ENCODE measurements at regions of chr4 and their contacts with region 1.

Region 1: DNA sequence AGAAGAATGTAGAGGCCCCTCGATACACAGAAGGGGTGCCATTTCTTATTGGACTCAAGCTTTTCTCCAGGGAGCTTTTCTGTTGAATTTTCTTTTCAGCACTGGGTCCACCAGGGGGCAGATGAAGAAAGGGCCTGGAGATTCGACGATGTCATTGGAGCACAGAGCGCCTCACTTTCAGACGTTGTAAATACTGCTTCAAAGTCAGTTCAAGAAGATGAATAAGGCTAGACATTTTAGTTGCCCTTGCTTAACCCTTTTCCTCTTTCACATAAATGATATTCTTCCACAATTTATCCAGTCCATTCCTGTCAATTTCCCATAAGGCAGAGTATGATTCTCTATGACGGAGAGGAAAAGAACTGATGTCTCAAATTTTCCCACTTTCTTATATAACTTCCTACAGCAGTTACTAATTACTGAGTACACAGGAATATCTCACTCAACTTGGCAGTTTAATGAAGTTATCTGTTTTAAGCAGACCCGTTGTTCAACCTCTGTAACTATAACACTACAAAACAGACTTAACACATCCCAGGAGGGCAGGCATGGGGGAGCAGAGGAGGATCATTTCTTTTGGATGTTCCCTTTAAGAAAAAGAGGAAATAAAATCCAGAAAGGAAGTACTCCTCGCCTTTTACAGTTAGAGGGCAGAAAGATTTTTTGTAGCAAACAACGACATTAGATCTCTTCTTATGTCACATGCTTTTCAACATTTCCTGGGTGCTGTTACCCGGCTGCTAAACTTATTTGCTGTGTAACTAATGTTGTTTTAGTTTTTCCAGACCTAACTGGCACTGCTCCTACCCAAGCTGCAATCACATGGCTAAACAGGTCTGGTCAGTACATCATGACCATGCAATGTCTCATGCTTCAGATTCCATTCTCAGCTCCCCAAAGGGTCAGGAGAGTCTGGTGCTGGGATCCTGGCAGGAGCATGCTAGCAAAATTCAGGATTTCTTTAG is 12.2 kb upstream of the CENPU start:
- DNase-seq: peak; percentile 65 to 78
- ATAC-seq: peak; percentile 44 to 73 (median 56)
- H3K4me3 ChIP-seq: peak overlapping the region; percentile 31
- H3K27ac ChIP-seq: peak overlapping the region; percentile 75
- H3K4me1 ChIP-seq: peaks cover 37% of the 10 kb centered on the region
- H3K27me3 ChIP-seq: no peaks in the 10 kb centered on the region
- CTCF ChIP-seq: peak; percentile 81

Region 2: GRCh38 chr4:184613405-184613804 is 132.7 kb before region 1 on chr4:
- intact Hi-C with region 1: no loop called
- DNase-seq: no peak
- ATAC-seq: no peak
- H3K4me3 ChIP-seq: no peak overlapping the region
- H3K27ac ChIP-seq: no peak overlapping the region
- H3K4me1 ChIP-seq: no peaks in the 10 kb centered on the region
- H3K27me3 ChIP-seq: no peaks in the 10 kb centered on the region
- CTCF ChIP-seq: no peak

Region 3: GRCh38 chr4:184815046-184815877 is 69.1 kb after region 1 on chr4:
- intact Hi-C with region 1: loop called in 1 of 2 experiments (anchors 5 kb)
- DNase-seq: peak; percentile 77 to 86
- ATAC-seq: peak; percentile 44 to 67 (median 51)
- H3K4me3 ChIP-seq: peak overlapping the region; percentile 47
- H3K27ac ChIP-seq: peak overlapping the region; percentile 92
- H3K4me1 ChIP-seq: peaks cover 70% of the 10 kb centered on the region
- H3K27me3 ChIP-seq: no peaks in the 10 kb centered on the region
- CTCF ChIP-seq: no peak

Region 4: GRCh38 chr4:184899261-184900134 is 153.4 kb after region 1 on chr4:
- intact Hi-C with region 1: loop called in 1 of 2 experiments (anchors 5 kb)
- DNase-seq: peak; percentile 34 to 58
- ATAC-seq: peak; percentile 61 to 90 (median 80)
- H3K4me3 ChIP-seq: no peak overlapping the region
- H3K27ac ChIP-seq: no peak overlapping the region
- H3K4me1 ChIP-seq: peaks cover 4% of the 10 kb centered on the region
- H3K27me3 ChIP-seq: no peaks in the 10 kb centered on the region
- CTCF ChIP-seq: no peak

Region 5: DNA sequence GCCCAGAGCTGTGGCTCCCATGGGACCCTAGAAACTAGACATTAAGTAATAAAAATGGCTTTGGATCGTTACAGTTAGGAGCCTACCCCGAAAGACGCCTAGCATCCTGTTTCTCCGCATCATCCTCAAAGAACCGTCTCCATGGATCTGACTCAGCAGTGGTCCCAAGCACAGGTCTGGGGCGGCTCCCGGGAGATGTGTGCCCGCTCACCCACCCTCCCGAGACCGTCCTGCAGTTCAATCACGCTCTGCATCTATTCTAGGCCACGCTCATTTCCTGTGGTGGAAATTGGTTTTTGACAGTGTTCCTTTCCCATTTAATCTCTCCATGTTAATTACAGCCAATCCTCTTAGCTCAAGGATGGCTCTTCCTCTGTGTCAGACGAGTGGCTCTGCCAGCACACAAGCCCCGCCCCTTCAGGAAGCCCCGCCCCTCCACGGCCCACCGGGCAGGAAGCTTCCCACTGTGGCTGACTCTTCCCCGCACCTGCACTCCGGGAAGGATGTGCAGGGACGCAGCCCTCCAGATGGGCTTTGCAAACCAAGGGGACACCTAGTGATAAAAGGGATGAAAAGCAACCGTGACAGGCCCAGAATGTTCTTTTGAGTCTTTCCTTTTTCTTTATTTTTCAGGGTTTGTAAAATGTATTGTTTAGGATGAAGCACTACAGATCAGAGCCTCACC is 237.7 kb after region 1 on chr4:
- intact Hi-C with region 1: loop called (anchors 2 to 5 kb)
- DNase-seq: peak; percentile 53 to 79
- ATAC-seq: peak; percentile 70 to 93 (median 86)
- H3K4me3 ChIP-seq: no peak overlapping the region
- H3K27ac ChIP-seq: no peak overlapping the region
- H3K4me1 ChIP-seq: peaks cover under 1% of the 10 kb centered on the region
- H3K27me3 ChIP-seq: no peaks in the 10 kb centered on the region
- CTCF ChIP-seq: peak; percentile 51

Region 6: DNA sequence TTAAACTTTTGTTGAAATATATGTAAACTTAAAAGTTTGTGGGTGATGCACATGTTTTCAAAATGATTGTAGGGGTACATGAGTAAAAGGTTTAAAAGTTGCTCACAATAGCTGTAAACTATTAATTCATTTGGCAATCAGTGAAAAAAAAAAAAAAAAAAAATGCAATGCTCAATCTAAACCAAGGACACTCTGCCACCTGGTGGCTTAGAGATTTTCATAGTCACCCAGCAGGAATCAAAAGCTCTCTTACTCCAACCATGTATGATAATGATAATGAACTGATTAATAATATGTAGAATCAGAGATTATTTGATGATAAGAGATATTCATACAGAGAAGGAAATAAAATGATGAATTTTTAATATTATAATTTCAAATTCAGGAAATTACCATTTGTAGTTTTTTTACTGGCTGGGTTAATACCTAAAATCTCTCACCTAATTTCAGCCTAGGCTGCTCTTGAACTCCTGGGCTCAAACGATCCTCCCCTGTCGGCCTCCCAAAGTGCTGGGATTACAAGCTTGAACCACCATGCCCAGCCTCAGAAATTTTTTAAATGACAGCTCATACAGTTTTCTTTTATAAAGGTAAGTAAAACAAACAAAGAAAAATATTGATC is 350.0 kb after region 1 on chr4:
- intact Hi-C with region 1: loop called in 1 of 2 experiments (anchors 10 kb)
- DNase-seq: no peak
- ATAC-seq: peak in 3 of 4 donors; percentile 60 to 75 (median 69)
- H3K4me3 ChIP-seq: no peak overlapping the region
- H3K27ac ChIP-seq: no peak overlapping the region
- H3K4me1 ChIP-seq: no peaks in the 10 kb centered on the region
- H3K27me3 ChIP-seq: no peaks in the 10 kb centered on the region
- CTCF ChIP-seq: peak; percentile 65

Region 7: GRCh38 chr4:185192059-185192458 is 445.9 kb after region 1 on chr4:
- intact Hi-C with region 1: no loop called
- DNase-seq: no peak
- ATAC-seq: no peak
- H3K4me3 ChIP-seq: no peak overlapping the region
- H3K27ac ChIP-seq: no peak overlapping the region
- H3K4me1 ChIP-seq: no peaks in the 10 kb centered on the region
- H3K27me3 ChIP-seq: no peaks in the 10 kb centered on the region
- CTCF ChIP-seq: no peak

Measured in psoas muscle (tissue), 8 donors.